ENCODE measurements at regions of chr9 and their contacts with region 1.

Region 1: GRCh38 chr9:96818535-96818934 is 35.8 kb downstream of the ZNF782 start:
- DNase-seq: peak; percentile 4
- H3K4me3 ChIP-seq: no peak overlapping the region
- H3K27ac ChIP-seq: no peak overlapping the region
- H3K4me1 ChIP-seq: no peaks in the 10 kb centered on the region
- H3K27me3 ChIP-seq: no peaks in the 10 kb centered on the region
- CTCF ChIP-seq: no peak
- POLR2A ChIP-seq: no peak

Region 2: GRCh38 chr9:96762568-96762967 is 56.0 kb before region 1 on chr9:
- CTCF ChIA-PET with region 1: no interaction called
- POLR2A ChIA-PET with region 1: no interaction called
- dilution Hi-C with region 1: no loop called
- intact Hi-C with region 1: loop called (anchors 5 kb)
- DNase-seq: no peak
- H3K4me3 ChIP-seq: no peak overlapping the region
- H3K27ac ChIP-seq: no peak overlapping the region
- H3K4me1 ChIP-seq: no peaks in the 10 kb centered on the region
- H3K27me3 ChIP-seq: no peaks in the 10 kb centered on the region
- CTCF ChIP-seq: no peak
- POLR2A ChIP-seq: no peak

Region 3: DNA sequence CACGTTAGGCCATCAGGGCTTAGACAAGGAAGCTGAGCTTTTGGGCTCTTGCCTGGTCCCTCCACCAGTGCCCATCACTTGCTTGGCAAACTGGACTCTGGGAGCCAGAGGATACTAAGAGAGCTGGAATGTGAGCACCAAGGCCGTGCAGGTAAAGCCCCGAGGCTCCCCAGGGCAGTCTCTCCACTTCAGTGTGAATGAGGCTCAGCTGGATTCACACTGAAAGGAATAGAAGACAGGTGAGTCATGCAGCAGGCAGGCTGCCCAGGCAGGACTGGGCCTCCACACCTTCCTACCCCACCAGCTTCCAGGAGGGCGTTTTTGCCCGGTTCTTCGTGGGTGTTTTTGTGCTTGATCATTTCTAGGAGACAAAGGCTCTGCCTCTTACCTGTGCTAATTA is 227.7 kb after region 1 on chr9:
- CTCF ChIA-PET with region 1: no interaction called
- POLR2A ChIA-PET with region 1: no interaction called
- dilution Hi-C with region 1: no loop called
- intact Hi-C with region 1: no loop called
- DNase-seq: no peak
- H3K4me3 ChIP-seq: no peak overlapping the region
- H3K27ac ChIP-seq: no peak overlapping the region
- H3K4me1 ChIP-seq: no peaks in the 10 kb centered on the region
- H3K27me3 ChIP-seq: peaks cover 7 to 12% of the 10 kb centered on the region in 2 experiments
- CTCF ChIP-seq: no peak
- POLR2A ChIP-seq: no peak